ENCODE measurements at regions of chr6 and their contacts with region 1.

Region 1: GRCh38 chr6:121055572-121056163 is 278.6 kb downstream of the TBC1D32 start:
- DNase-seq: no peak
- H3K4me3 Mint-ChIP-seq: no peak overlapping the region
- H3K27ac Mint-ChIP-seq: no peak overlapping the region
- H3K4me1 Mint-ChIP-seq: no peaks in the 10 kb centered on the region
- H3K27me3 Mint-ChIP-seq: no peaks in the 10 kb centered on the region

Region 2: GRCh38 chr6:121222656-121223055 is 167.0 kb after region 1 on chr6:
- CTCF ChIA-PET with region 1: no interaction called
- intact Hi-C with region 1: loop called (anchors 1 kb)
- DNase-seq: no peak
- H3K4me3 Mint-ChIP-seq: no peak overlapping the region
- H3K27ac Mint-ChIP-seq: no peak overlapping the region
- H3K4me1 Mint-ChIP-seq: no peaks in the 10 kb centered on the region
- H3K27me3 Mint-ChIP-seq: no peaks in the 10 kb centered on the region

Region 3: DNA sequence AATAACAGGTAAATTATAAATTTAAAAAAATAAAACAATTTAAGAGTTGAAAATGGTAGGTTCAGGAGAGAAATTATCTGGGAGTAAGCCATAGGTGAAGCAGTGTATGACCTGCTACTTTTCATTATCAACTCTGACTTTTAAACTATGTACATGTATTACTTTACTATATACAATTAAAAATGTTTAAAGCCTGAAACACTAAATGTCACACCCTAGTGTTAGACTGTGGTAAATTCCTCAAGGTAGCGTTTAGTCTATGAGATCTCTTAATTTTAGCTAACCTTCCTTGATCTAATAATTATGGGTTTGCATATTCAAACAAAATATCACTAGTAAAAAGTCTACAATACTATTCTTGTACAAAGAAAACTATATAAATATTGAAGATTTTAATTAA is 300.9 kb after region 1 on chr6:
- CTCF ChIA-PET with region 1: no interaction called
- intact Hi-C with region 1: loop called (anchors 1 kb)
- DNase-seq: no peak
- H3K4me3 Mint-ChIP-seq: no peak overlapping the region
- H3K27ac Mint-ChIP-seq: no peak overlapping the region
- H3K4me1 Mint-ChIP-seq: no peaks in the 10 kb centered on the region
- H3K27me3 Mint-ChIP-seq: peaks cover 18% of the 10 kb centered on the region

Region 4: GRCh38 chr6:121849477-121849876 is 793.8 kb after region 1 on chr6:
- CTCF ChIA-PET with region 1: interaction called, 3 read pairs
- intact Hi-C with region 1: loop called (anchors 1 kb)
- DNase-seq: peak; percentile 54
- H3K4me3 Mint-ChIP-seq: no peak overlapping the region
- H3K27ac Mint-ChIP-seq: no peak overlapping the region
- H3K4me1 Mint-ChIP-seq: peaks cover 7% of the 10 kb centered on the region
- H3K27me3 Mint-ChIP-seq: peaks cover 5% of the 10 kb centered on the region

Region 5: GRCh38 chr6:122372647-122373046 is 1317.0 kb after region 1 on chr6:
- CTCF ChIA-PET with region 1: no interaction called
- intact Hi-C with region 1: loop called (anchors 1 kb)
- DNase-seq: no peak
- H3K4me3 Mint-ChIP-seq: no peak overlapping the region
- H3K27ac Mint-ChIP-seq: no peak overlapping the region
- H3K4me1 Mint-ChIP-seq: peaks cover 20% of the 10 kb centered on the region
- H3K27me3 Mint-ChIP-seq: peaks cover 10% of the 10 kb centered on the region